ENCODE measurements at regions of chr20 and their contacts with region 1.

Region 1: GRCh38 chr20:21235484-21236445 is 67.4 kb upstream of the XRN2 start:
- DNase-seq: peak; percentile 83
- H3K4me3 Mint-ChIP-seq: no peak overlapping the region
- H3K27ac Mint-ChIP-seq: no peak overlapping the region
- H3K4me1 Mint-ChIP-seq: no peaks in the 10 kb centered on the region
- H3K27me3 Mint-ChIP-seq: no peaks in the 10 kb centered on the region

Region 2: DNA sequence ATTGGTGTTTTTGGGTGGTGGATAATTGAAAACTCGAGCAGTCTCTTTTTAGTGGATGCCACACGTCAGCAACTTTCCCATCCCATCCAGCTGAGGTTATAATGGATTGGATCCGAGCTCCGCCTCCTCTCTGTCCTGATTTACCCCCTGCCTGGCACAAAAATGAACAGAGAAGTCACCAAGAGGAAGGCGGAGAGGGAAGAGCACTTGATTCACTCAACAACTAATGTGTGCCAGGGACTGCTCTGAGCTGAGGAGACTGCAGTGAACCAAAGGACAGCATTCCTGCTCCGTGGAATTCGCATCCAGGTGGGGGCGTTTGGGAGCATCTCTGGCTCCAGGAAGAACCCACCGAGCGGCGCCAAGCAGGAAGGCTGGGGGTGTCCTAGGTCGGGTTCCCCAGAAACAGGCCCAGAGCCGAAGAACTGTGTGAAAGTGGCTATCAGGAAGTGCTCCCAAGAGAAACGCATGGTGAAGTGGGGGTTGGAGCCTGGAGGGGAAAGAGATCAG is 1314.4 kb before region 1 on chr20:
- CTCF ChIA-PET with region 1: no interaction called
- intact Hi-C with region 1: no loop called
- DNase-seq: no peak
- H3K4me3 Mint-ChIP-seq: no peak overlapping the region
- H3K27ac Mint-ChIP-seq: no peak overlapping the region
- H3K4me1 Mint-ChIP-seq: no peaks in the 10 kb centered on the region
- H3K27me3 Mint-ChIP-seq: peaks cover 5% of the 10 kb centered on the region

Region 3: DNA sequence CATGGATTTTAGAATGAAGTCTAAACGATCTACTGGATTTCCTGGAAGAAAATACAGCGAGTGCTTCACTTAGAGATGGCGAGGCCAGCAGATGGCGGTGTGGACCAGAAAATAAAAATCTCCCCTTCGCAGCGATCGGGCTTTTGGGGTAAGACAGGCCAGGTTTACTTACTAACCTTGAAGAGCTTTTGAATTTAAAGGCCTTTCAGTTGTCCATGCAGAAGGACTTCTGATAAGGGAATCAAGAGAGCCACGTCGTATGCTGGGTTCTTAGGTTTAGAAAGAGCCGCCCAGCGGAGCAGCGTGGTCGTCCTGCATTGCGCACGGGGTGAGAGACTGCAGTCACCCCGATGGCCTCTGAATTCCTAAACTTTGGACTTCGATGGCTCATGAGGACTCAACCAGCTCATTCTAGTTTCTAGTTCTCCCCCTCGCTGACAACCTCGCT is 398.2 kb before region 1 on chr20:
- CTCF ChIA-PET with region 1: no interaction called
- intact Hi-C with region 1: loop called (anchors 2 kb)
- DNase-seq: peak; percentile 67
- H3K4me3 Mint-ChIP-seq: no peak overlapping the region
- H3K27ac Mint-ChIP-seq: no peak overlapping the region
- H3K4me1 Mint-ChIP-seq: peaks cover 3% of the 10 kb centered on the region
- H3K27me3 Mint-ChIP-seq: peaks cover 7% of the 10 kb centered on the region

Region 4: GRCh38 chr20:21225215-21225947 is 10.4 kb before region 1 on chr20:
- CTCF ChIA-PET with region 1: interaction called, 10 read pairs
- intact Hi-C with region 1: no loop called
- DNase-seq: no peak
- H3K4me3 Mint-ChIP-seq: no peak overlapping the region
- H3K27ac Mint-ChIP-seq: no peak overlapping the region
- H3K4me1 Mint-ChIP-seq: no peaks in the 10 kb centered on the region
- H3K27me3 Mint-ChIP-seq: no peaks in the 10 kb centered on the region

Region 5: GRCh38 chr20:21395666-21396598 is 160.2 kb after region 1 on chr20:
- CTCF ChIA-PET with region 1: interaction called, 10 read pairs
- intact Hi-C with region 1: loop called (anchors 2 kb)
- DNase-seq: peak; percentile 54
- H3K4me3 Mint-ChIP-seq: peak overlapping the region; percentile 50
- H3K27ac Mint-ChIP-seq: no peak overlapping the region
- H3K4me1 Mint-ChIP-seq: peaks cover 18% of the 10 kb centered on the region
- H3K27me3 Mint-ChIP-seq: peaks cover 71% of the 10 kb centered on the region

Region 6: DNA sequence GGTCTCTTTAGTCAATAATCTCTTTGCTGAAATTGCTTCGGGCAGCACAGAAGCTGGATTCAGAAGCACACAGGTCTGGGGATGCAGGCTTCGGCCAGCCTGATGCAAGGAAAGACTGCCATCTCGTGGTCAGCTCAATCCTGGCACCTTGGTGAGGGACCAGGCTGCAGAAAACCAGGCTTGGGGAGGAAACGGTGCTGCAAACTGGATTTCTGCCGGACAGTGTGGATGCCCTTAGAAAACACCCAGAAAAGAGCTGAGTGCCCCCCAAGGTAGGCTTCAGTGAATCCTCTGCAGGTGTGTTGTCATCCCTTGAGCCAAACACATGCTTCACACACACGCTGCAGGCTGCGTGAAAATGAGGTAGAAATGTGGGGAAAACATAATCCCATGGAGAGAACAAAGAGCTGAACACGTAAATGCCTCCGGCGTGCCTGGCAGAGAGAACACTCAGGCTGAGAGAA is 379.9 kb after region 1 on chr20:
- CTCF ChIA-PET with region 1: interaction called, 15 read pairs
- intact Hi-C with region 1: loop called (anchors 1 kb)
- DNase-seq: peak; percentile 73
- H3K4me3 Mint-ChIP-seq: no peak overlapping the region
- H3K27ac Mint-ChIP-seq: no peak overlapping the region
- H3K4me1 Mint-ChIP-seq: no peaks in the 10 kb centered on the region
- H3K27me3 Mint-ChIP-seq: peaks cover 42% of the 10 kb centered on the region

Measured in activated naive CD4-positive, alpha-beta T cell treated with anti-CD3 and anti-CD28 coated beads for 36 hours (primary cell).